ENCODE measurements at regions of chr1 and their contacts with region 1.

Region 1: DNA sequence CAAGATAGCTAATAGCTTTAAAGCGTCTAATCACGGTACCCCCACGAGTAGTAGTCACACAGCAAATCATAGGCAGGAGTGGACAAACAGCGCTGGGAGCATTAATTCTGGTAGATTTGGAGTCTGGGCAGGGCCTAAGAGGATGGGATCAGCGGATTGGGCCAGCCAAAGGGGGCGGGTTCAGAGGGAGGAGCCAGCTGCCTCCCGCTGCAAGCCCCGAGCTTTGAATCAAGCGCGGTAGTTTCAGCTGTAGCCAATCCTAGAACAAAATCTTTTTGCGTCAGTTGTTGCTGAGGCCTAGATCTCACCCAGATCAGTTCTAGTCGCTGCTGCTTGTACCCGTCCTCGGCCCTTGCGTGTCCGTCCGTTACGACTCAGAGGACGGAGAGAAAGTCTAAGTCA is 576 bp upstream of the NASP start:
- DNase-seq: peak; percentile 92 to 95
- H3K4me3 ChIP-seq: peak overlapping the region; percentile 86
- H3K27ac ChIP-seq: peak overlapping the region; percentile 64
- H3K4me1 ChIP-seq: peaks cover 17% of the 10 kb centered on the region
- H3K27me3 ChIP-seq: no peaks in the 10 kb centered on the region
- CTCF ChIP-seq: no peak

Region 2: GRCh38 chr1:45339789-45340570 is 243.3 kb before region 1 on chr1 and contains the starts of genes MUTYH and TOE1:
- CTCF ChIA-PET with region 1: no interaction called
- POLR2A ChIA-PET with region 1: interaction called, 3 read pairs
- intact Hi-C with region 1: loop called (anchors 5 kb)
- DNase-seq: peak; percentile 79 to 97
- H3K4me3 ChIP-seq: peak within 1 kb of the TSS; percentile 68
- H3K27ac ChIP-seq: peak within 1 kb of the TSS; percentile 86
- H3K4me1 ChIP-seq: peaks cover 55% of the 10 kb centered on the region
- H3K27me3 ChIP-seq: no peaks in the 10 kb centered on the region
- CTCF ChIP-seq: 0 out of 2 replicates have a peak, but pooled peaks have one; percentile 24
- total RNA-seq, gene MUTYH: 52.4 and 53.2 TPM in 2 replicates
- total RNA-seq, gene TOE1: 14.5 and 20.4 TPM in 2 replicates

Region 3: DNA sequence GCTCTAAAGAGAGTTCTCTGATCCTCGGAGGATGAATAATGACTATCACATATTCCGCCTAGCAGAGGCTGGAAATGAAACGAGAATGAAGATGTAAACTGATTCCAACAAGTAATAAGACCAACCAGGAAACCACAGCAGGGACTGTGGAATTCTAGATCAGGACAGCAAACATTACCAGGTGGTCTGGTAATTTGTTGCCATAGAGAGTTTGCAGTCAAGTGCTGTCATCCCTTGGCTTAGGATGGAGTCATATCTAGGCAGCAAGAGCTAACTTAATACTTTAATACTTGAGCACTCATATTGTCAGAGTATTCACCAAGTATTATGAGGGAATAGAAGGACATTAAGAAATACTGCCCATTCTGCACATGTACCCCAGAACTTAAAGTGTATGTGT is 198.0 kb before region 1 on chr1:
- CTCF ChIA-PET with region 1: no interaction called
- POLR2A ChIA-PET with region 1: no interaction called
- intact Hi-C with region 1: no loop called
- DNase-seq: no peak
- H3K4me3 ChIP-seq: no peak overlapping the region
- H3K27ac ChIP-seq: no peak overlapping the region
- H3K4me1 ChIP-seq: no peaks in the 10 kb centered on the region
- H3K27me3 ChIP-seq: no peaks in the 10 kb centered on the region
- CTCF ChIP-seq: no peak

Region 4: DNA sequence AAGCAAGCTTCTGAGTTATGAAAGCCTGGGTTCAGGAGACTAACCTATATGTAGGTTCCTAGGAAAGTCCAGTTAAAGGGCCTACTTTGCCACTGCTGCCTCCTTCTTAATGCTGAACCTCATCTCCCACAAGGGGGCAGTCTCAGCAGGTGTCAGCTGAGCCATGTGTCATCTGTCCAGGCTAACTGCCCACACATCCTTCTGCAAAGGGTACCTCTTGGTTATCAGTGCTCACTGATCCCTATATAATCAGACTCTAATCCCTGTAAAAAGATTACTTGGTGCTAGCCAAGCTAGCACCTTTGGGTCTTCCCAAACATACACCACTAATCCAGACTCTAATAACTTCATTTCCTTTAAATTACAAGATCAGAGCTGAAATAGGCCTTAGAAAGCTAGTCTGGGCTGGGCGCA is 70.6 kb before region 1 on chr1:
- CTCF ChIA-PET with region 1: interaction called, 5 read pairs
- POLR2A ChIA-PET with region 1: interaction called, 23 read pairs
- intact Hi-C with region 1: no loop called
- DNase-seq: peak; percentile 55 to 61
- H3K4me3 ChIP-seq: no peak overlapping the region
- H3K27ac ChIP-seq: no peak overlapping the region
- H3K4me1 ChIP-seq: peaks cover 20% of the 10 kb centered on the region
- H3K27me3 ChIP-seq: no peaks in the 10 kb centered on the region
- CTCF ChIP-seq: peak; percentile 80

Region 5: GRCh38 chr1:45557422-45557944 is 25.8 kb before region 1 on chr1:
- CTCF ChIA-PET with region 1: interaction called, 11 read pairs
- POLR2A ChIA-PET with region 1: no interaction called
- intact Hi-C with region 1: loop called (anchors 2 kb)
- DNase-seq: peak; percentile 59 to 86
- H3K4me3 ChIP-seq: no peak overlapping the region
- H3K27ac ChIP-seq: no peak overlapping the region
- H3K4me1 ChIP-seq: peaks cover 2% of the 10 kb centered on the region
- H3K27me3 ChIP-seq: no peaks in the 10 kb centered on the region
- CTCF ChIP-seq: no peak

Region 6: DNA sequence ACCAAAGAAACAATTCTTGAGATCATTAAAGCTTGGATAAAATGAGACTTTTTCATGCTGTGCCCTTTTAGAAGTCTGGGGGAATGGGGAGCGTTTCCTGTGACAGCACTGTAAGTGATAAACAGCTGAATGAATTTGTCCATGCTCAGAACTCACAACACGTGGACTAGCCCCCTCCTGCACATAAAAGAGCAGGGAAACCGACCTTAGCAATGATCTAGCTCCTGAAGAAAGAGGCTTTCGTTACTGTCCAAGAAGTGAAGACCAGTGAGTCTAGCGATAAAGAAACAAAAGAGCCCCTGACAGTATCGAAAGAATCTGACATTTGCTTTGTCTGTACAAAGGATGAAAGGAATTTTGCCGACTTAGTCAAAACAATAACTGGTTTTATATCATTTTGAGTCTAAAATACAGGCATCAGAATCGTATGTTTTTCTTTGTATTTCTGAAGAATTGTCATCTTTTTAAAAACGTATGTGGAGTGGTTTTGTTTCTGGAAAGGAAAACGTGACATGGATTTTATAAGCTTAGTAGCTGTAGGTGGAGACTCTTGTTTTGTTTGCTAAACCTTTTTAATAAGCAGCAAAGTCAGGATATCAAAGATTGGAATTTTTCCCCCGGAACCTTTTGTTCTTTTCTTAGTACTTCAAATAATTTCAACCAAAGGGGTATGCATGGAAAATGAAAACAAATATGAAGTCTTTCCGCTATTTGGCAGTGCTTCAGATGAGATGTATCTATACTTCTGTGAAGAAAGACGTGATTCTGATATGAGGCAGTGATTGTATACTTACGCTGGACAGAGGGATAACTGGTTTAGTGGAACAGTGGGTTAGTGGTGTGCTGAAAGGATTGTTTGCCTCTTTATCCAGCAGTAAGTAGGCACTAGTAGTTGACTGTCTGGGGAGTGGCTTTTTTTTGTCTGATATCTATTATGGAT is 281.2 kb after region 1 on chr1:
- CTCF ChIA-PET with region 1: no interaction called
- POLR2A ChIA-PET with region 1: no interaction called
- intact Hi-C with region 1: loop called (anchors 5 kb)
- DNase-seq: no peak
- H3K4me3 ChIP-seq: no peak overlapping the region
- H3K27ac ChIP-seq: no peak overlapping the region
- H3K4me1 ChIP-seq: peaks cover 12% of the 10 kb centered on the region
- H3K27me3 ChIP-seq: no peaks in the 10 kb centered on the region
- CTCF ChIP-seq: no peak

Measured in PC-9 (cell line).